ENCODE measurements at regions of chr12 and their contacts with region 1.

Region 1: GRCh38 chr12:4857472-4858291 is 52.0 kb upstream of the KCNA1 start:
- DNase-seq: peak; percentile 61 to 88 (median 84)
- ATAC-seq: peak; percentile 80 to 81
- H3K4me3 ChIP-seq: peak overlapping the region; percentile 1
- H3K27ac ChIP-seq: no peak overlapping the region
- H3K4me1 ChIP-seq: no peaks in the 10 kb centered on the region
- H3K27me3 ChIP-seq: no peaks in the 10 kb centered on the region

Region 2: DNA sequence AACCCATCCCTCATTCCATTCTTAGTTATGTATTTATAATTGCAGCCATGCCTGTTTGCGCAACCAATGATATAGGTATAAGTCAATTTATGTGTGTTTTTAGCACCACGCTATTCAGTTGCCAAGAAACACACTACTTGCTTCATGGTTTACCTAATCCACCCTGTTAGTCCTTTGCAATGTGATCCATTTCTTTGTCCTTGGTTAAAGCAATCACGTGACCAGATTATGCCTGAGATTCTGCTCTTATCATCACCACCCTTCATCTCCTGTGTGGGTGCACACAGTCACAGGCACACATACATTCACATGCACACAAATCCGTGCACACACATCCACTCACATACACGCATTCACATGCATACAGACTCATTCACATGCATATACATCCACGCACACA is 133.7 kb after region 1 on chr12:
- intact Hi-C with region 1: loop called in 1 of 4 experiments (anchors 5 kb)
- DNase-seq: no peak
- ATAC-seq: no peak
- H3K4me3 ChIP-seq: no peak overlapping the region
- H3K27ac ChIP-seq: no peak overlapping the region
- H3K4me1 ChIP-seq: peaks cover 1% of the 10 kb centered on the region
- H3K27me3 ChIP-seq: no peaks in the 10 kb centered on the region

Region 3: DNA sequence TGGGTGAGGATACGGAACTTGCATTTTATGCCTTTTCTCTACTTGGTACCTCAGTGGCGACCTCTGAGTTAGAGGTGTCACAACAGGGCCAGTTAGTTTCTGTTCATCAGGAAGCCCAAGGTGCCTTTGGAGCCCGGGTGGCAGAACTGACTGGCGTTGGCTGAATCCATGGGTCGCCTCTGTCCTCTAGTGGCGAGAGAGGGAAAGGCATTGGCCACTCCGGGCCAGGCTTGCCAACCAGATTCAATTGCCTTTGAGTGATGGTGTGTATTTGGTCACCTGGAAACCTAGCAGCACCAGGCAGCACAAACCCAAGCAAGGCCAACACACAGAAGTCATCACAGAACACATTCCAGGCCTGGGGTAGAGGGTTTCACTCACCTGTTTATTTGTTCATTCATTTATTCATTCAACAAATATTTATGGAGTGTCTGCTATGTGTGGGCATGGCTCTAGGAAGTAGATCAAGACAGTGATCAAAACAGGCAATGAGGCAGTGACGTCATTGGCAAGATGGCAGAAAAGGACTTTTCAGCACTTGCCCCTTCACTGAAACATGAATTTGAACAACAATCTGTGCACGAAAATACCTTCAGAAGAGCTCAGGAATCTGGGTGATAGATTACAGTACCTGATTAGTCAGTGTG is 145.5 kb after region 1 on chr12:
- intact Hi-C with region 1: loop called (anchors 2 to 10 kb)
- DNase-seq: peak; percentile 57 to 83 (median 76)
- ATAC-seq: peak; percentile 85 to 86
- H3K4me3 ChIP-seq: no peak overlapping the region
- H3K27ac ChIP-seq: no peak overlapping the region
- H3K4me1 ChIP-seq: no peaks in the 10 kb centered on the region
- H3K27me3 ChIP-seq: no peaks in the 10 kb centered on the region

Region 4: GRCh38 chr12:5083955-5084849 is 226.5 kb after region 1 on chr12:
- intact Hi-C with region 1: loop called in 2 of 4 experiments (anchors 2 to 10 kb)
- DNase-seq: no peak
- ATAC-seq: peak; percentile 63 to 67
- H3K4me3 ChIP-seq: no peak overlapping the region
- H3K27ac ChIP-seq: no peak overlapping the region
- H3K4me1 ChIP-seq: peaks cover 2% of the 10 kb centered on the region
- H3K27me3 ChIP-seq: no peaks in the 10 kb centered on the region